Mammary epithelial cell (primary cell): ENCODE measurements at regions of chr5 and their contacts with region 1.

Region 1: DNA sequence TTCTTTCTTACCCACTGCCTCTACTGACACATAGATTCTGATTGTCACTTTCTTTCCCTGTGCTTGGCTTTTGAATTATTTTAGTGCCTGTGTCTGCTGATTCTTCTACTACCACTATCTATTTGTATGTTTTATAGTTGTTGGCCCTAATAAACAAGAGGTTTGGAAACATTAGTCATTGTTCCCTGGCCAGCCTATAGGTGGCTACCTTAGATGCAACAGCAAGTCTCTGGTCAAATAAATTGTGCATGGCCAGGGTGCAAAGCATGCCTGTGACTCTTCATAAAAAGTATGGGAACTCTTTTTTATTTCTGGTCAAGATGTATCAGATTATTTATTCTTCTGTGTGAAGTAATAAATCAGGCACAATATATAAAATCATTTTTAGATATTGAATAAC is 124.4 kb downstream of the PLK2 start:
- DNase-seq: peak; percentile 26
- H3K4me3 ChIP-seq: no peak overlapping the region
- H3K27ac ChIP-seq: no peak overlapping the region
- H3K4me1 ChIP-seq: peaks cover 9% of the 10 kb centered on the region
- H3K27me3 ChIP-seq: no peaks in the 10 kb centered on the region
- CTCF ChIP-seq: peak in 1 of 2 donors; percentile 59

Region 2: DNA sequence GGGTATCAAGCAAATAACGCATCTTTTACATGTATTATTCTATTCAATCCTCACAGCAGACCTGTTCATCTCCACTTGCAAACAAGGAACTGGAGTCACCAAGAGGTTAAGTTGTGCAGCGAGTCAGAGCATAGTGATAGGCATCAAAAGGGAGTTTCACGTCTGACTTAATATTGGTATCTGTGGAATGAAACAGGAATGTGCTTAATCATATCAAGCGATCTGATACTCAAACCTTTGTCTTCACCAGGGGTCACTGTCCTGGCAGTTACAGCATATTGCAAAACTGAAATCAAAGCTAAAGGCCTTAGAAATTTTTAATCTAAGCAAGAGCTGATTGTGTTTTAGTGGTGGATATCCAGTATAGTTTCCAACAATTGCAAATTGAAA is 147.3 kb before region 1 on chr5:
- CTCF ChIA-PET with region 1: no interaction called
- dilution Hi-C with region 1: no loop called
- in situ Hi-C with region 1: no loop called
- intact Hi-C with region 1: loop called (anchors 5 kb)
- DNase-seq: peak; percentile 91
- H3K4me3 ChIP-seq: no peak overlapping the region
- H3K27ac ChIP-seq: peak overlapping the region; percentile 86
- H3K4me1 ChIP-seq: peaks cover 44% of the 10 kb centered on the region
- H3K27me3 ChIP-seq: no peaks in the 10 kb centered on the region
- CTCF ChIP-seq: peak; percentile 33 to 45

Region 3: GRCh38 chr5:58201922-58202648 is 133.4 kb before region 1 on chr5:
- CTCF ChIA-PET with region 1: no interaction called
- dilution Hi-C with region 1: no loop called
- in situ Hi-C with region 1: no loop called
- intact Hi-C with region 1: no loop called
- DNase-seq: peak; percentile 64
- H3K4me3 ChIP-seq: no peak overlapping the region
- H3K27ac ChIP-seq: no peak overlapping the region
- H3K4me1 ChIP-seq: peaks cover 11% of the 10 kb centered on the region
- H3K27me3 ChIP-seq: no peaks in the 10 kb centered on the region
- CTCF ChIP-seq: no peak

Region 4: DNA sequence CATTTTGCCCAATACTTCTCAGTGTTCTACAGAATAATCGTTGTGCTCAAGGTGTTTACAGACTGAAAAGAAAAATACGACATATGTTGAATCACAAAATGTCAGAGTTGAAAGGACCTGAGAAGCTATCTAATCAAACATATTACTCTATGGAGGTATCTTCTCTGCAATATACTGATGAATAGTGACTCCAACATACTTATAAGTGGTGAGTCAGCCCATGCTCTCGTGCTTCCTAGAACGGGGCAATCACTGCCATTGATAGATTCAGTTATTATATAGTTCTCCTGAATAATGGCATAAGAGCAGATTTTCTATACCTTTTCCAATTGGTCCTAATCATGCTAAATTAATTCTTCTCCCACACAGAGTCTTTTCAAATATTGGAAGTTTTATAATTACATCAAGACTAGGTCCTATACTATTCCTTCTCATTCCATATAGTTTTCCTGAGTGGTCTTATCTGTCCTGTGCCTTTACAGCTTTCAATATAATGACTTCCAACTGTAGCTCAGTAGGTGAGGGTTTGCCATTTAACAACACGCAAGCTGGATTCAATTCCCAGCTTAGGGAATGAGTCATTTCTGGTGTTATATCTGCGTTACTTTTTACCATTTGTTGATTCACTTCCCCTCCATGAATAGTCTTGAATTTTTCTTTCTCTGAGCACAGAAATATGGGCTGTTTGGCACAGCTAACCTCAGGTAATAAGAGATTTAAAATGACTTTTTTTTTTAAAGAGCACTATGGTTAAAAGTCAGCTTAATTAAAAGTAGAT is 43.3 kb after region 1 on chr5:
- CTCF ChIA-PET with region 1: no interaction called
- dilution Hi-C with region 1: no loop called
- in situ Hi-C with region 1: no loop called
- intact Hi-C with region 1: no loop called
- DNase-seq: no peak
- H3K4me3 ChIP-seq: no peak overlapping the region
- H3K27ac ChIP-seq: no peak overlapping the region
- H3K4me1 ChIP-seq: no peaks in the 10 kb centered on the region
- H3K27me3 ChIP-seq: no peaks in the 10 kb centered on the region
- CTCF ChIP-seq: no peak